Left ventricle myocardium superior (tissue), 1 donor: ENCODE measurements at regions of chr7 and their contacts with region 1.

Region 1: GRCh38 chr7:104923010-104923421 is 91.0 kb upstream of the KMT2E start:
- DNase-seq: peak; percentile 69
- ATAC-seq: peak; percentile 93

Region 2: DNA sequence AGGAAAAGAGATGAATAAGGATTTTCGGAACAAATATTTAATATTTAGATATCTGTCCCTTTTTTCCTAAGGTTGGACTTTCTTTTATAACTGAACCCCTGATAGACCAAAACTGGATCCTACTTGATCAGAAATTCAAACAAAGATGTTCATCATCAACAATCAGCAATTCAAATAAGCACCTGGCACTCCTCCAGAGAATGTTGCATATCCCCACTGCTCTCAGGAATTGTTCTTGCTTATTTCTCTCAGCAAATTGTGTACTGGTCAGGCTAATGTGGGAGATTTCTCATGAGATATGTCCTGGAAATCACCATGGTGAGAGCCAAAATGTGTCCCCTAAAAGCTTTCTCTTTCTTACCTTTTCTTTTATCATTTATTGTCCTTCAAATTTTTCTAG is 634.9 kb before region 1 on chr7:
- intact Hi-C with region 1: no loop called
- DNase-seq: no peak
- ATAC-seq: no peak

Region 3: DNA sequence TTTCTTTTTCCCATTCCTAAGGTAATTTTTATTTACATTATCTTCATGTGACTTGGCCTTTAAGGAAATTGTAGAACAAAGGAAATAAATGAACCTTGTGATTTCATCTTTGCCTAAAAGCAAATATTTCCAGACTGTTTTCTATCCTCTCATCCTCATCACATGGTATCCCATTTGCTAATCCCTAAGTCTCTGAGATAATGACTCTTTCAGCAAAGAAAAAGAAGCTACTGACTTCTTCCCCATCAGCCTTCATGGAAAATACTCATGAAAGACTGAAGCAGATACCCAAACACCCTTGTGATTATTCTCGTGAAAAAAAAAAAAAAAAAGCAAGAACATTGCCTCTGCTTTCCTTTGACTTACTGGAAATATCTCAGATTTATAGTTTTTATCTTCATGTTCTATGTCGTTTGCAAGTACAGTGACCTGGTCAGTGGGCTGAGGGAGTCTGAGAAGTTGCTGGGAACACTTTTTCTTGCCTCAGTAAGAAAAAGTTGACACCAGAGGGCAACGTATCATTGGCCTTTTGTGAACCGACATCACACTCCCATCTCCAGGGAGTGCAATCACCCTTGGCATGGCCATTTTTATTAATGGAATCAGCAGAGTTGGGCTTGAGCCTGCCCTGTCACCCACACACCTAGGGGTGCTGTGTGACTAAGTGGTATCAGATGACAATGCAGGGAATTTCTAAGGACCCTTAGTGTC is 155.0 kb before region 1 on chr7:
- intact Hi-C with region 1: no loop called
- DNase-seq: no peak
- ATAC-seq: no peak

Region 4: GRCh38 chr7:104838537-104839299 is 84.3 kb before region 1 on chr7:
- intact Hi-C with region 1: no loop called
- DNase-seq: no peak
- ATAC-seq: no peak

Region 5: GRCh38 chr7:104883718-104884452 is 39.1 kb before region 1 on chr7:
- intact Hi-C with region 1: loop called (anchors 5 kb)
- DNase-seq: peak; percentile 93
- ATAC-seq: peak; percentile 98

Region 6: GRCh38 chr7:104895522-104896236 is 27.3 kb before region 1 on chr7:
- intact Hi-C with region 1: no loop called
- DNase-seq: no peak
- ATAC-seq: no peak